B cell (primary cell): ENCODE measurements at regions of chr10 and their contacts with region 1.

Region 1: DNA sequence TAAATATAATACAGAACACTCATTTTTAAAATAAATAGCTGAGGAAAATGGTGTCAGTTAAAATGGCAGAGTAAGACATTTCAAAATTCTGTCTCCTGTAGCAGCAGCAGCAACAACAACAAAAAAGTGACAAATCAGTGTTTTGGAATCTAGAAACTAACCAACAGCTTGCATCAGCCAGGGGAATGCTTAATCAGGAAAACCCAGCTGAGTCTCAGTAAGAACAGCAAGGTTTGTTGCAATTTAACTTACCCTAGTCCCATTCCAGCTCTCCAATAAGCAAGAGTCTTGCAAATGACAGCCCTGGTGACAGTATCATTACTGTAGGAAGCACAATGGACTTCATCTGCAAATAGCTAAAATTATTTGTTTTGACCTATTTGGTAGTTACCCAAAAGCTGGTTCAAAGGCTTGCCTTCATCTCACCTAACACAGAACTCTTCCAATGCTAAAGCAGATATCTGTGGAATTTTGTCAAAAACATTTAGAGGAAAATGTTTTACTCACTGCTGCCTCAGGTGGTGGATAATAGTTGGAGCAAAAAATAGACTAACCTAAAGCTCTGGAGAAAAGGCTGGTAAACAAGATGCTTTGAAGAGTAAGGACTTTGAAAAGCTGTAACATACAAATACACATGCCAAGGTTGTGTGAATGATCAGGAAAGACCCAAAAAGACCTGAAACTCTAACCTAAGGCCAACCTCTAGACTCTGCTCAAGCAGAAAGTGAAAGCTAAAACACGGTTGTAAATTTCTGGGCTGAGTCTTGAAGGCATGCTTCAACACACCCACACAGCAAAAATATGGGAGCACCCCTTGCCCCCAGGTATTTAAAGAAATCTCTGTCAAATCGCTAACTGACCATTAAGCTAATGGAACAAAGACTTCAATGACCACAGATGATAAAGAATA is 9.9 kb upstream of the ARHGAP22 start:
- DNase-seq: no peak
- ATAC-seq: peak; percentile 45
- H3K4me3 ChIP-seq: no peak overlapping the region
- H3K4me3 Mint-ChIP-seq: peak overlapping the region; percentile 30
- H3K27ac ChIP-seq: no peak overlapping the region
- H3K27ac Mint-ChIP-seq: no peak overlapping the region
- H3K4me1 ChIP-seq: peaks cover 3 to 8% of the 10 kb centered on the region in 2 donors
- H3K4me1 Mint-ChIP-seq: peaks cover 10% of the 10 kb centered on the region
- H3K27me3 ChIP-seq: peaks cover 0 to 2% (median 1%) of the 10 kb centered on the region in 4 experiments
- H3K27me3 Mint-ChIP-seq: peaks cover 28% of the 10 kb centered on the region
- CTCF ChIP-seq: peak; percentile 64

Region 2: GRCh38 chr10:48639632-48640031 is 24.9 kb after region 1 on chr10:
- CTCF ChIA-PET with region 1: interaction called, 12 read pairs
- POLR2A ChIA-PET with region 1: no interaction called
- intact Hi-C with region 1: loop called (anchors 2 kb)
- DNase-seq: no peak
- ATAC-seq: no peak
- H3K4me3 ChIP-seq: no peak overlapping the region
- H3K4me3 Mint-ChIP-seq: no peak overlapping the region
- H3K27ac ChIP-seq: no peak overlapping the region
- H3K27ac Mint-ChIP-seq: no peak overlapping the region
- H3K4me1 ChIP-seq: peaks cover 22 to 24% of the 10 kb centered on the region in 2 donors
- H3K4me1 Mint-ChIP-seq: peaks cover 28% of the 10 kb centered on the region
- H3K27me3 ChIP-seq: peaks cover 0 to 27% (median 16%) of the 10 kb centered on the region in 4 experiments
- H3K27me3 Mint-ChIP-seq: peaks cover 26% of the 10 kb centered on the region
- CTCF ChIP-seq: no peak